ENCODE measurements at regions of chr11 and their contacts with region 1.

Region 1: GRCh38 chr11:9460322-9461067 is at the start of gene ZNF143:
- DNase-seq: peak; percentile 100
- H3K4me3 ChIP-seq: peak within 1 kb of the TSS; percentile 84 to 99 (median 94)
- H3K27ac ChIP-seq: peak within 1 kb of the TSS; percentile 99
- H3K4me1 ChIP-seq: no peaks in the 10 kb centered on the region; a peak in 1 of 7 replicates
- H3K27me3 ChIP-seq: no peaks in the 10 kb centered on the region
- CTCF ChIP-seq: no peak
- EP300 ChIP-seq: no peak
- POLR2A ChIP-seq: peak in 1 of 2 experiments; percentile 73; a peak in 2 of 3 replicates
- RAD21 ChIP-seq: peak in 1 of 2 experiments; percentile 3; a peak in 1 of 4 replicates
- total RNA-seq, gene ZNF143: 38.9 and 43.0 TPM in 2 replicates

Region 2: GRCh38 chr11:9230291-9230690 is 230.2 kb before region 1 on chr11:
- CTCF ChIA-PET with region 1: no interaction called
- POLR2A ChIA-PET with region 1: no interaction called
- DNase-seq: no peak
- H3K4me3 ChIP-seq: no peak overlapping the region
- H3K27ac ChIP-seq: no peak overlapping the region
- H3K4me1 ChIP-seq: peaks cover 15 to 27% (median 23%) of the 10 kb centered on the region in 4 experiments; a peak in 6 of 7 replicates
- H3K27me3 ChIP-seq: peaks cover 0 to 13% (median 0%) of the 10 kb centered on the region in 4 experiments; a peak in 4 of 7 replicates
- CTCF ChIP-seq: no peak
- EP300 ChIP-seq: no peak
- POLR2A ChIP-seq: no peak
- RAD21 ChIP-seq: no peak

Region 3: DNA sequence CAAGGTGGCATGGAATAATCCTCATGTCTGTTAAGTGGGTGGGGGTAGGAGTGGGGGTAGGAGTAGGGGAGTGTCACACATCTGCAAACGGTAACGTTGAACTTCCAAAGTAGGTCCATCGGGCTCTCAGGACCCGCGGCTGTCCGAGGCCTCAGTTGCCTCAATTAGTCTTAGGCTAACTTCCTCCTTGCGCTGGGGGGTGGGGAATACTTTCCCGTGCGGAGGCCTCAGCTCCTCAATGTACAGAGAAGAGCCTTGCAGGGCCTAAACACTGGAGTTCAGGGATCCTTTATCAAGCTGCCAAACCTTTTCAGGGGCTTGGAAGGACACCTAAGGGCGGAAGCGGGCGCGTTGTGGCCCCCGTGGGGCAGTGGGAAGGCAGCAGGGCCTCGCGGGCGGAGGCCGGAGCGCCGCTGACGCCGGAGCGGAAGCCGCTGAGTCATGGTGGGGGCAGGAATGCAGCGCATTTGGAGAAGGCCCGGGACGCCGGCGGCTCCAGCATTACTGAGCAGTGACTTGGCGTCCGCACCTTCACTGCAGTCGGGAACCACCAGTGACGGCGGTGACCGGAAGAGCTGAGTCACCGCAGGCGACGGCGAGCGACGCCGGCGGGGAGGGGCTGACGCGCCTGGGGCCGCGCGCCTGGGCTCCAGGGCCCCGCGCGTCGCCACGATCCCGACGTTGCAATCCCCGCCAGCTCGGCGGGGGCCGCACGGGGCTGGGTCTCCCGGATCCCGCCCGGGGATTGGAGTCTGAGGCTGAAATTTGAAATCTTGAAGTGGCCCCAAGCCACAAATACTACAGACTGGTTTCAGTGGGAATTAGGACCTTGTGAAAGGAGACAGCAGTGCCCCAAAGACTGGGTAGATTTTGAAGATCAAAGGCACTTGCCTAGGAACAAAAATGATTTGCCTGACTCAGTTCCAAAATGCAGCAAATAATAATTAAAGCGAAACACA is 96.3 kb before region 1 on chr11:
- CTCF ChIA-PET with region 1: no interaction called
- POLR2A ChIA-PET with region 1: interaction called, 12 read pairs
- DNase-seq: peak; percentile 88 to 89
- H3K4me3 ChIP-seq: peak overlapping the region; percentile 19 to 59 (median 45)
- H3K27ac ChIP-seq: peak overlapping the region; percentile 92
- H3K4me1 ChIP-seq: peaks cover 4 to 15% (median 10%) of the 10 kb centered on the region in 4 experiments
- H3K27me3 ChIP-seq: no peaks in the 10 kb centered on the region
- CTCF ChIP-seq: no peak
- EP300 ChIP-seq: peak in 1 of 2 experiments; percentile 19; a peak in 1 of 3 replicates
- POLR2A ChIP-seq: peak; percentile 55 to 80; a peak in 2 of 3 replicates
- RAD21 ChIP-seq: no peak

Region 4: GRCh38 chr11:9396752-9397151 is 63.7 kb before region 1 on chr11:
- CTCF ChIA-PET with region 1: no interaction called
- POLR2A ChIA-PET with region 1: interaction called, 10 read pairs
- DNase-seq: no peak
- H3K4me3 ChIP-seq: no peak overlapping the region
- H3K27ac ChIP-seq: no peak overlapping the region
- H3K4me1 ChIP-seq: peaks cover 0 to 3% (median under 1%) of the 10 kb centered on the region in 4 experiments; a peak in 2 of 7 replicates
- H3K27me3 ChIP-seq: no peaks in the 10 kb centered on the region
- CTCF ChIP-seq: no peak
- EP300 ChIP-seq: no peak
- POLR2A ChIP-seq: no peak
- RAD21 ChIP-seq: no peak

Region 5: DNA sequence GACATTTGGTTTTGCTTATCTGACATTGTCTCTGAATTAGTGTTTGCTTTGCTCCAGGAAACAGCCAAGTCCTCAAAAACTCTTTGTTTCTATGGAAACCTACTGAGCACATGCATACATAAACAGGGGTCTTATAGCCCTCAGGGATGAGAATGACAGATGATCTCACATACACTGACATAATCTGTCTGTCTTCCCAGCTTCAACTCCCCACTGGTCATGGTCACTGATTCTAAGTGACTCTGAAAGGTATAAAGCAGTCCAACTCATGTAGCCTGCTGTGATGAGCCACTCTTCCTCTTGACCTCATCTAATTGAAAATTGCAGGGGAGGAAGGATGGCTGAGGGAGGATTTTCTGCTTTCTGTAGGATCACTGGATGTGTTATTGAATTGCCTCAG is 12.9 kb after region 1 on chr11:
- CTCF ChIA-PET with region 1: interaction called, 4 read pairs
- POLR2A ChIA-PET with region 1: interaction called, 44 read pairs
- DNase-seq: no peak
- H3K4me3 ChIP-seq: no peak overlapping the region
- H3K27ac ChIP-seq: no peak overlapping the region
- H3K4me1 ChIP-seq: no peaks in the 10 kb centered on the region
- H3K27me3 ChIP-seq: no peaks in the 10 kb centered on the region
- CTCF ChIP-seq: no peak
- EP300 ChIP-seq: no peak
- POLR2A ChIP-seq: no peak
- RAD21 ChIP-seq: no peak

Region 6: DNA sequence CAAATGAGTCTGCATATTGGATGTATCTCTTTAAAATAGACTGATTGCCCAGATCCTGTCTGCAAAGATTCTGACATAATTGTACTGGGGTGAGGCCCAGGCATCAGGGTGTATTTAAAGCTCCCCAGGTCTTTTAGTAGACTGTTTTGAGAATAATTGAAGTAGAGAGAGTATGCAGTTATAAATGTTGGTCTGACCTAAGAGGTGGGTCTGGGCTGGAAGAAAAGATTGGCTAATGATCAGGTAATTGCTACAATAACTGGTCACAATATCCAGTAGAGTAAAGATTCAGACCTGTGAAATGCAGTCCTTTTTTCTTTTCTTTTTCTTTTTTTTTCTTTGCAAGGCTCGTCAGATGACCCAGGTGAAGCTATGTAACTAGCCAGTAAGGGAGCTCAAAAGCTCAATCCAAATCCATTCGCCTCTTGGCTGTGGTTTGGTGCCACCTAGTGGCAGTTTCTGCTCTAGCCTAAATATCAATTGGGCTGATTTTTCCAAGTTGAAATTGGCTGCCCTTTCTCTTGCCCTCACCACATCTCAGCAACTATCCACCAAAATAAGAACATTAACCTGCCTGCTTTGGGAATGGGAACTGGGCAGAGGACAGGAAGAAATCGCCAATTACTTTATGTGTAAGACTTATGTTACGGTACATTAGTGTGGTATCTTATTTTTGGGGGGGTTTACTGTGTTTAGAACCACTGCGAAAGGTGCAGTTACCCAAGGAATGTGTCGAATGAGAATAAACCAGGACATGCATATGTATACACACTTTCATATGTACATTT is 46.2 kb after region 1 on chr11:
- CTCF ChIA-PET with region 1: interaction called, 7 read pairs
- POLR2A ChIA-PET with region 1: interaction called, 20 read pairs
- DNase-seq: peak; percentile 79 to 86
- H3K4me3 ChIP-seq: peak overlapping the region in 1 of 4 experiments; percentile 37; a peak in 2 of 8 replicates
- H3K27ac ChIP-seq: no peak overlapping the region; the same call in 1 of the 2 replicates
- H3K4me1 ChIP-seq: peaks cover 0 to 6% (median 3%) of the 10 kb centered on the region in 4 experiments; a peak in 5 of 7 replicates
- H3K27me3 ChIP-seq: no peaks in the 10 kb centered on the region
- CTCF ChIP-seq: peak; percentile 24 to 94 (median 82)
- EP300 ChIP-seq: no peak
- POLR2A ChIP-seq: no peak
- RAD21 ChIP-seq: peak; percentile 92 to 93

Region 7: DNA sequence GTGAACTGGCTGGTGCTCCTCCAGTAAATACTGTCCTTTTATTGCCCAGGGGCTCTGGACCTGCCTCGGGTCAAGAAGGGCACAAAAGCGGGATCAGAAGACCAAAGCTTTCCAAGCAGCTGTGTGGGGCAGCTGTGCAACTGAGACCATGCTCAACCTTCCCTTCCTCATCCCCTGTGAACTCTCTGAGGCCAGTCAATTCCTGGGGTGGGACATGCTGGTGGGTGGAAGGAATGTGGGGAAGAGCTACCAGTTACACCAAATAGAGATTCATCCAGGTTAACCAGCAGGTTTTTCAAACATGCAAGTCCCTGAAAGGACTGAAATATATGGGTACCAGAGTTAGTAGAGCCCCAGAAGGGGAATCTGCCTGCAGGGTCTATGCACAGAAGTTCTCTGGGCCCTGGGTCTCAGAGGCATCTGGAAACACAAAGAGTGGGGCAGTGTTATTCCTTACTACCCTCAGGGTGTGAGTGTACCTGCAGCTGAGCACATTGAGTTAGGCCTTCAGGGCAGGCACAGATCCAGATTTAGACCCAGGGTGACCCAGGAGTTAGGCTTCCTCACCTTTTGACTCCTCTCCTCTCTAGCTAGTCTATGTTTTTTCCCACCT is 159.4 kb after region 1 on chr11:
- CTCF ChIA-PET with region 1: no interaction called
- POLR2A ChIA-PET with region 1: no interaction called
- DNase-seq: no peak
- H3K4me3 ChIP-seq: no peak overlapping the region
- H3K27ac ChIP-seq: no peak overlapping the region
- H3K4me1 ChIP-seq: peaks cover 0 to under 1% (median 0%) of the 10 kb centered on the region in 4 experiments; a peak in 2 of 7 replicates
- H3K27me3 ChIP-seq: no peaks in the 10 kb centered on the region; a peak in 1 of 7 replicates
- CTCF ChIP-seq: no peak
- EP300 ChIP-seq: no peak
- POLR2A ChIP-seq: no peak
- RAD21 ChIP-seq: no peak

Measured in H1 (cell line).